ENCODE measurements at regions of chr14 and their contacts with region 1.

Region 1: GRCh38 chr14:88868558-88869159 is 44.2 kb downstream of the TTC8 start:
- DNase-seq: no peak
- H3K4me3 ChIP-seq: no peak overlapping the region
- H3K27ac ChIP-seq: no peak overlapping the region
- H3K4me1 ChIP-seq: no peaks in the 10 kb centered on the region
- H3K27me3 ChIP-seq: no peaks in the 10 kb centered on the region
- CTCF ChIP-seq: peak in 5 of 11 experiments; percentile 9 to 36 (median 25)
- POLR2A ChIP-seq: no peak

Region 2: DNA sequence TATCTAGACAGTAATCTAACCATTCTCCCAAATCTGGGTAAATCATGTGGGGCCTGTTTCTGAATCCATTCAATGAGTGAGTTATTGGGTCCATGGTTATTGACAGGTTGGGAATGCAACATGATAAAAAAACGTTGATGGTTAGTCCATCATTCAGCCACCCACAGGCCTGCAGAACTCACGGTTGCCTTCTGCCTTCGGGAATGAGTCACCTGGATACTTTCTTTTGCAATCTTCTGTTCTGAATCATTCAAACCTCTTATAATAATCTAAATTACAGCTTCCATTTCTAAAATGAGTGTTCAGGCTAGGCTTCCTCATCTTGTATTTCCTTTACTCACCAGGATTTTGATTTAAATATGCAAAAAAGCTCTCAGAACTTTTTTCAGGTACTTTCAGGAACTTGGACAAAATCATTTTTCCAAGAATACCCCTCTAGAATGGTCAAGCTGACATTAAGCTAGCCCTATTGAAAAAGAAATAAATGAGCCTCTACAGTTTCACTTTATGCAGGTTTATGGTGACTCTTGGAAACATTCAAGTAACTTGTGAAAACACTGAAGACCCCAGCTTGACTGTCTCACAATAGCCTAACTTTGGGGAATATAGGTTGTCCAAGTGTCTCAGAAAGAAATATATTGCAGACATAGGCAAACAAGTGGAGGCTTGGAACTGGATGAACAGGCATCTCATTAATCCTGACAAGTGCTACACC is 640.0 kb before region 1 on chr14:
- intact Hi-C with region 1: no loop called
- DNase-seq: no peak
- H3K4me3 ChIP-seq: no peak overlapping the region
- H3K27ac ChIP-seq: no peak overlapping the region
- H3K4me1 ChIP-seq: no peaks in the 10 kb centered on the region
- H3K27me3 ChIP-seq: no peaks in the 10 kb centered on the region
- CTCF ChIP-seq: no peak
- POLR2A ChIP-seq: no peak

Region 3: DNA sequence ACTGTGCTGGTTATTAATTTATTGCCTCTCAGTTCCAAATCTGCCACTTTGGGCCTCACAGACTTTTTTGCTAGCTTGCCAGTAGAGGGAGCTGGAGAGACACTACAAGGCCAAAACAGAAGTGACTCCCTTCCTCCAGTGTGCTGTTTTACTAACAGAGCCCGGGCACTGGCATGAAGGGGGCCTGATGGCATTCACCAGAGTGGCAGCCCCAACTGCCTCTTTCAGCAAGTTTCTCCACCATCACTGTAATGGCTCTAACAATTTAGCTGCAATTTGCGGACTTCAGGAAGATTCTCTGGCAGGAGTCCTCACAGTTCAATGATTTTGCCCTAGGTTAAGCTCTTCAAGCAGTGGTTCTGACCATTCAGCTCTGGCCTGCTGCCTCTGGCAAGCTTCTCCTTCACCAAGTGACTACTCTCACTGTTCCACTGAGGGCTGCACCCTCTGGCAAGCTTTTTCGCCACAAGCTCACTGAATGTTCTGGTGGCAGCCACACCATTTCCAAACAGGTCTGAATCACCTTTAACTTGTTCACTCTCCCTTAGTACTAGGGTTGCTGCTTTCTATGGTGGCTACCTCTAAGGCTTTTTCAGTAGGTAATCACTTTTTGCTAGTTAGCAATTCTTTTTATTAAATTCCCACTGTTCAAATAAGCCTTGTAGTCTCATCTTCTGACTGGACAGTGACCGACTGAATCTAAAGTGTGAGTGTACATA is 200.9 kb before region 1 on chr14:
- intact Hi-C with region 1: loop called (anchors 5 kb)
- DNase-seq: no peak
- H3K4me3 ChIP-seq: no peak overlapping the region
- H3K27ac ChIP-seq: peak overlapping the region in 4 of 8 donors; percentile 1 to 45 (median 6)
- H3K4me1 ChIP-seq: peaks cover 0 to 20% (median 16%) of the 10 kb centered on the region in 6 donors
- H3K27me3 ChIP-seq: no peaks in the 10 kb centered on the region
- CTCF ChIP-seq: peak; percentile 28 to 81 (median 73)
- POLR2A ChIP-seq: no peak

Region 4: GRCh38 chr14:88910386-88910785 is 41.7 kb after region 1 on chr14:
- intact Hi-C with region 1: no loop called
- DNase-seq: no peak
- H3K4me3 ChIP-seq: no peak overlapping the region
- H3K27ac ChIP-seq: no peak overlapping the region
- H3K4me1 ChIP-seq: no peaks in the 10 kb centered on the region
- H3K27me3 ChIP-seq: peaks cover 0 to 17% (median 0%) of the 10 kb centered on the region in 7 donors
- CTCF ChIP-seq: no peak
- POLR2A ChIP-seq: no peak

Region 5: GRCh38 chr14:89359477-89360222 is 491.0 kb after region 1 on chr14:
- intact Hi-C with region 1: no loop called
- DNase-seq: no peak
- H3K4me3 ChIP-seq: no peak overlapping the region
- H3K27ac ChIP-seq: peak overlapping the region in 6 of 8 donors; percentile 6 to 87 (median 63)
- H3K4me1 ChIP-seq: peaks cover 11 to 68% (median 41%) of the 10 kb centered on the region in 6 donors
- H3K27me3 ChIP-seq: no peaks in the 10 kb centered on the region
- CTCF ChIP-seq: no peak
- POLR2A ChIP-seq: no peak